Endothelial cell of umbilical vein (primary cell): ENCODE measurements at regions of chr22 and their contacts with region 1.

Region 1: DNA sequence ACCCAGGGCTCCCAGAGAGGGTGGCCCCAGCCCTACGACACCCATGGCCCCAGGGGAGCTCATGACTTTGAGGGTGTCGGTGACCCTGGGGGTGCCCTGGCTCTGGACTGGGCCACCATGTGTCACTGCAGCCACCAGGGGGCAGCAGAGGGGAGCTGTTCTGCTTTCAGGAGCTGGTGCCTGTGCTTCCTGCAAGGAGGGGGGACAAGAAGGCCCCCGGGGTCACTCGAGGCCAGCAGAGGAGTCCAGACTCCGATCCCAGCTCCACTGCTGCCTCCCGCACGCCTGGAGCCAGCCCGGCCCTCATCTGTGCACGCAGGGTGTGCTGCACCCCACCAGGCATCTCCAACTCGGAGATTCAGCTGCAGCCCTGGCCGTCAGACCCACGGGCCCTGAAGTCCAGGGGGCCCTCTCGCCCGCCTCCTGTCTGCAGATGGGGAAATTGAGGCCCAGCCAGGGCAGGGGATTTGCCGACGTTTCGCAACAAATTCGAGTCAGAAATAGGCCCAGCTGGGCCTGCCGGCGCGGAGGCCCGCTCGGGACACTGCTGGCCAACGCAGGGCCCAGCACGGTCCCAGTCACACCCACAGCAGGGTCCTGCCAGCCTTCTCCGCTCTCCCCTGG is 29.5 kb upstream of the WNT7B start:
- DNase-seq: peak; percentile 82
- H3K4me3 ChIP-seq: no peak overlapping the region
- H3K27ac ChIP-seq: peak overlapping the region; percentile 86
- H3K4me1 ChIP-seq: peaks cover 23% of the 10 kb centered on the region
- H3K27me3 ChIP-seq: no peaks in the 10 kb centered on the region
- CTCF ChIP-seq: peak; percentile 94 to 95
- POLR2A ChIP-seq: no peak

Region 2: GRCh38 chr22:45769569-45770210 is 236.8 kb before region 1 on chr22:
- CTCF ChIA-PET with region 1: no interaction called
- POLR2A ChIA-PET with region 1: no interaction called
- dilution Hi-C with region 1: no loop called
- intact Hi-C with region 1: no loop called
- DNase-seq: no peak
- H3K4me3 ChIP-seq: no peak overlapping the region
- H3K27ac ChIP-seq: no peak overlapping the region
- H3K4me1 ChIP-seq: no peaks in the 10 kb centered on the region
- H3K27me3 ChIP-seq: no peaks in the 10 kb centered on the region
- CTCF ChIP-seq: no peak
- POLR2A ChIP-seq: no peak

Region 3: GRCh38 chr22:45977003-45977411 is 29.5 kb before region 1 on chr22 and contains the start of gene WNT7B:
- CTCF ChIA-PET with region 1: no interaction called
- POLR2A ChIA-PET with region 1: no interaction called
- dilution Hi-C with region 1: no loop called
- intact Hi-C with region 1: no loop called
- DNase-seq: no peak
- H3K4me3 ChIP-seq: no peak within 1 kb of the TSS
- H3K27ac ChIP-seq: no peak within 1 kb of the TSS
- H3K4me1 ChIP-seq: no peaks in the 10 kb centered on the region
- H3K27me3 ChIP-seq: peaks cover 45 to 53% of the 10 kb centered on the region in 2 experiments
- CTCF ChIP-seq: no peak
- POLR2A ChIP-seq: no peak
- total RNA-seq, gene WNT7B: not detected in 2 replicates

Region 4: DNA sequence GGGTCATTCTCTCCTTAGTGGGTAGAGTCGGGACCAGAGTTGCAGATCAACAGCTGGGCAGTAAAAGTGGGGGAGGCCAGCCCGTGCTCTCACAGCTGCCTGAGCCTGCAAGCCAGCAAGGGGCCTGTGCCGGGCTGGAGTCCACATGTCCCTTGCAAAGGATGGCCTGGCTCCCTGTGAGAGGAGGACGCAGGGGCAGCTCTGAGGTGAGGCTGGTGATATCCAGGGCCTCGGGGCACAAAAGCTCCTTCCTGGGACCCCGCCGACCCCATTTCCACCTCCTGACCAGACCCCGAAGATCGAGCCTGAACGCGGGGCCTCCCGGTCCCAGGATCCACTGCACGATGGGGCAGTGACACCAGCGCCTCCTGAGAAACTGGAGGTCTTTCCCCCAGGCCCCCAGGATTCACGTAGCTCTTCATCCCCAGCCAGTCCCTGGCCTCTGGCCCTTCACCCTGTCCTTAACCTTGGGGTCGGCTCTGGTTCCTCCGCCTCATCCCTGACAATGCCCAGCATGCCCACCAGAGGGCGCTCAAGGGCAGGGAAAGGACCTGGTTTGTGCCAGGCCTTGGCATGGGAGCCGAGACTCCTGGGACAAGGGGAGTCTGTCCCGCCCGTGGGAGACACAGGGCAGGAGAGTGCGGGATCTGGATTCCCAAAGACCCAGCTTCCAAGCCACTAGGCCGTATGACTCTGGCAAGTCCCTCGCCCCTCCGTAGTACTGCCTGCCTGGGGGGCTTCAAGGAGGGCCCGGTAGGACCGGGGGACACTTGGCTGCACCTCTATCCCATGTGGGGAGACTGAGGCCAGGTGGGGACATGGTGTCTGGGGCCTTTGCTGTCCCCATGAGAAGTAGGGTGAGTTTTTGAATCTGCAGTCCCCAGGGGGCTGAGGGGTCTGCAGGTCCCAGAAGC is 11.7 kb before region 1 on chr22:
- CTCF ChIA-PET with region 1: interaction called, 194 read pairs
- POLR2A ChIA-PET with region 1: interaction called, 23 read pairs
- dilution Hi-C with region 1: no loop called
- intact Hi-C with region 1: loop called (anchors 1 kb)
- DNase-seq: peak; percentile 55
- H3K4me3 ChIP-seq: no peak overlapping the region
- H3K27ac ChIP-seq: no peak overlapping the region
- H3K4me1 ChIP-seq: peaks cover 31% of the 10 kb centered on the region
- H3K27me3 ChIP-seq: no peaks in the 10 kb centered on the region
- CTCF ChIP-seq: peak; percentile 91 to 95
- POLR2A ChIP-seq: no peak

Region 5: DNA sequence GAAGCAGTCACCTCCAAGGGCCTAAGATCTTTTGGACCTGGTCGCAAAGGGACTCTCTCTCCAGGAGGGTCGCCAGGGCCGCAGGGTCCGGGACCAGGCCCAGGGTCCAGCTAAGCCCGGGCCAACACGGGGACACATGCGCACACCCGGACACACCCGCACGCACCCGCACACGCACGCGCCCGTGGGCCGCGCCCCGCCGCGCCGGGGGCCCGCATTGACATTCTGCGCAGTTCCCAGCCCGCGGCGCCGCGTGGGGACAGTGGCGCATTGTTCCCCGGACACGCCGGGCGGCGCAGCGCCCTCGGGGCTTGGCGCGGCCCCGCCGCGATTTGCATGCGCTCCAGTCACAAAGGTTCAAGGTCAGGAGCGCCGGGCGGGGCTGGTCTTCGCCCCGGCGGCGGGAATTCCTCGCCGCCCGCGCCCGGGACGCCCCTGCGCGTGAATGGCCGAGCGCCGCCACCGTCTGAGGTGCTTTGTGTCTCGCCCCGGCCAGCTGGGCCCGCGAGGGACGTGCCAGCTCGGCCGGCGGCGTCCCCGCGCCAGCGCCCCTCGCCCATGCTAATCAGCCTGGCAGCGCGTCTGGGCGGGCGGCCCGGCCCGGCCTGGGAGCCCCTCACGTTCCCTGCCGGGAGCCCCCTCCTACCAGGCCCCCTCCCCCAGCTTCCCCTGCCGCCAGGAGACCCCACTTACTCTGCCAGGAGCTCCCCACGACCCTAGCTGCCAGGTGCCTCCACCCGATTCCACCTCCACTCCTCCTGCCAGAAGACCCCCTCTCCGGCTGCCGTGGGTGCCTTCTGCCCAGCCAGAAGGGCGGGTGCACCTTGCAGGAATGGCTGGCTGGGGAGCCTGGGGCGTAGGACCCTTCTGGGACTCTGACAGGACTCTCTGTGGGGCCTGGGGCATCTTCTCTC is 21.0 kb after region 1 on chr22:
- CTCF ChIA-PET with region 1: interaction called, 17 read pairs
- POLR2A ChIA-PET with region 1: no interaction called
- dilution Hi-C with region 1: no loop called
- intact Hi-C with region 1: no loop called
- DNase-seq: no peak
- H3K4me3 ChIP-seq: peak overlapping the region in 2 of 3 experiments; percentile 20 to 37
- H3K27ac ChIP-seq: no peak overlapping the region
- H3K4me1 ChIP-seq: peaks cover 3% of the 10 kb centered on the region
- H3K27me3 ChIP-seq: peaks cover 0 to 3% of the 10 kb centered on the region in 2 experiments
- CTCF ChIP-seq: no peak
- POLR2A ChIP-seq: no peak

Region 6: DNA sequence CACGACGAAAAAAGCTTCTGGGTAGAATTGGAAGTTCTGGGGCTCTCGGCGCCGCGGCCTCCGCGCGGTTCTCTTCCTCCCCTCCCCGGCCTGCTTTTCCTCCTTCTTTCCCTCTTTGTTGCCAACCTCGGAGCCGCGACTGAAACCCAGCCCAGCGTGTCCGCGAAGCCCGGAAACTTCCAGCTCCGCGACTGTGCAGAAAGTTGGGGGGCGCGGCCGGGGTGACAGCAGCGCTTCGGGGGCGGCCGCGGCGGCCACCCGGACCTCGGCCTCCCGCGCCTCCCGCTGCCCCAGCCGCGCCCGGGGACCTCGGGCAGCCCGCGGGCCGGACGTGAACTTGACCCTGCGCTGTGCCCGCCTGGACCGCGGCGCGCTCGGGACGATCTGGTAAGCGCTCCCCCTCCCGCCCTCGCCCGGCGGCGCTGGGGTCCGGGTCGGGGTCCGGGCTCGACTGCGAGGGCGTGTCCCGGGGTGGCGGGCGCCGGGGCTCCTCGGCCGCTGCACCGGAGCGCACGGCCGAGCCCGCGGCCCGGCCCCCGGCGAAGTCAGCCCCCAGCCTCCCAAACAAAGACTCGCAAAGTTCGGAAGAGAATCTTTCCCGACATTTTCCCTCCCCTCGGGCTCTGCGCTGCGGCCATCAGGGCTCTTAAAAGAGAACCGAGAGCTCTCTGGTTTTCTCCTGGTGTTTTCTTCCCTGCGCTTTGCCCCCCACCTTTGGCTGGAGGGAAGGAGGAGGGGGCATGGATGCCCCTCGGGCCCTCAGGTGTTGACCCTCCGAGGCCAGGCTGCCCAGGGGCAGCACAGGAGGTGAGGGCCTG is 38.3 kb after region 1 on chr22:
- CTCF ChIA-PET with region 1: interaction called, 23 read pairs
- POLR2A ChIA-PET with region 1: no interaction called
- dilution Hi-C with region 1: no loop called
- intact Hi-C with region 1: no loop called
- DNase-seq: peak; percentile 37
- H3K4me3 ChIP-seq: peak overlapping the region; percentile 42 to 47 (median 47)
- H3K27ac ChIP-seq: peak overlapping the region; percentile 53
- H3K4me1 ChIP-seq: peaks cover 22% of the 10 kb centered on the region
- H3K27me3 ChIP-seq: no peaks in the 10 kb centered on the region
- CTCF ChIP-seq: no peak
- POLR2A ChIP-seq: peak; percentile 54

Region 7: DNA sequence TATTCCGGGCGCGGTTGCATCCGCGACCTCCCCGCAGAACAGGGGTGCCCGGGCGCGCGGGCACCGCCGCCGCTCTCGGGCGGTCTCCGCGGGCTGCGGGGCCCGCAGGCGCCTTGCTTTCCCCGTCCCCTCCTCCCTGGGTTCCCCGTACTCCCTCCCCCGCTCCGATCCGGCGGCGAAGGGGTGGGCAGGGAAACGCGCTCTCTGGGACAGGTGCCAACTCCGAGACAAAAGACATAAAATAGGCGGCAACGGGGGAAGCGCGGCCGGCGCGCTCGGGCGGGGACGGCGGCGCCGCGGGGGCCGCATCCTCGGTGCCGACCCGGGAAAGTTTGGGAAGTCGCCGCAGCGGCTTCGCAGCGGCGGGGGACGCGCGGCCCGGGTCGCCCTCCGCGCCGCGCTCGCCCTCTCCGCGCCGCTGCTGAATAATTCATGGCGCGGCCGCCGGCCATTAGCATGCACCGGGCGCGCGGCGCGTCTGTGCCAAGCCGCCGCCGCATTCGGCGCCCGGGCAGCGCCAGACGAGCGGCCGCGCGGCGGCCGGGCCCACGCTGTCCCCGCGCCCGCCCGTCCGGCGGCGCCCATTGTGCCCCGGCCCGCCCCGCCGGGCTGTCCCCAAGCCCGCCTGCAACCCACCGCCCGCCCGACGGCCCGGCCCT is 65.1 kb after region 1 on chr22:
- CTCF ChIA-PET with region 1: interaction called, 65 read pairs
- POLR2A ChIA-PET with region 1: interaction called, 6 read pairs
- dilution Hi-C with region 1: no loop called
- intact Hi-C with region 1: loop called (anchors 1 kb)
- DNase-seq: peak; percentile 92
- H3K4me3 ChIP-seq: peak overlapping the region; percentile 64 to 88 (median 81)
- H3K27ac ChIP-seq: peak overlapping the region; percentile 68
- H3K4me1 ChIP-seq: peaks cover 53% of the 10 kb centered on the region
- H3K27me3 ChIP-seq: no peaks in the 10 kb centered on the region
- CTCF ChIP-seq: no peak
- POLR2A ChIP-seq: peak; percentile 91

Region 8: GRCh38 chr22:46087336-46088277 is 81.1 kb after region 1 on chr22:
- CTCF ChIA-PET with region 1: interaction called, 61 read pairs
- POLR2A ChIA-PET with region 1: interaction called, 3 read pairs
- dilution Hi-C with region 1: no loop called
- intact Hi-C with region 1: loop called (anchors 1 kb)
- DNase-seq: peak; percentile 85
- H3K4me3 ChIP-seq: no peak overlapping the region
- H3K27ac ChIP-seq: peak overlapping the region; percentile 85
- H3K4me1 ChIP-seq: peaks cover 69% of the 10 kb centered on the region
- H3K27me3 ChIP-seq: no peaks in the 10 kb centered on the region
- CTCF ChIP-seq: no peak
- POLR2A ChIP-seq: no peak

Region 9: GRCh38 chr22:46116491-46116958 is 110.0 kb after region 1 on chr22:
- CTCF ChIA-PET with region 1: interaction called, 241 read pairs
- POLR2A ChIA-PET with region 1: no interaction called
- dilution Hi-C with region 1: no loop called
- intact Hi-C with region 1: loop called (anchors 1 kb)
- DNase-seq: peak; percentile 85
- H3K4me3 ChIP-seq: no peak overlapping the region
- H3K27ac ChIP-seq: no peak overlapping the region
- H3K4me1 ChIP-seq: no peaks in the 10 kb centered on the region
- H3K27me3 ChIP-seq: no peaks in the 10 kb centered on the region
- CTCF ChIP-seq: peak; percentile 81 to 95
- POLR2A ChIP-seq: no peak